ENCODE measurements at regions of chr4 and their contacts with region 1.

Region 1: GRCh38 chr4:53196882-53197771 is 168.7 kb downstream of the SCFD2 start:
- DNase-seq: peak; percentile 80
- H3K4me3 ChIP-seq: peak overlapping the region; percentile 65
- H3K27ac ChIP-seq: peak overlapping the region; percentile 37
- H3K4me1 ChIP-seq: peaks cover 62% of the 10 kb centered on the region
- H3K27me3 ChIP-seq: no peaks in the 10 kb centered on the region

Region 2: DNA sequence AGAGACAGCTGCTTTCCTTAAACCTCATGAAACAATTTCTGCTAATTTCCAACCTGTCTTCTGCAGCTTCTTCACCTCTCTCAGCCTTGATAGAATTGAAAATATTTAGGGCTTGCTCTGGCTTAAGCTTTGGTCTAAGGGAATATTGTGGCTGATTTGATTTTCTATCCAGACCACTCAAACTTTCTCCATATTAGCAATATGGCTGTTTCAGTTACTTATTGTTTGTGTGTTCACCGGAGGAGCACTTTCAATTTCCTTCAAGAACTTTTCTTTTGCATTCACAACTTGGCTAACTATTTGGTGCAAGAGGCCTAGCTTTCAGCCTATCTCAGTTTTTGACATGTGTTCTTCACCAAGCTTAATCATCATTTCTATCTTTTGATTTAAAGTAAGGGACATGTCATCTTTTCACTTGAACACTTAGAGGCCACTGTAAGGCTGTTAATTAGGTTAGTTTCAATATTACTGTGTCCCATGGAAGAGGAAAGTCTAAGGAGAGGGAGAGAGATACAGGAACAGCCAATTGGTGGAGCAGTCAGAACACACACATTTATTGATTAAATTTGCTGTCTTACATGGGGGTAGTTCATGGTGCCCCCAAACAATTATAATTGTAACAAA is 121.9 kb before region 1 on chr4:
- in situ Hi-C with region 1: no loop called
- DNase-seq: no peak
- H3K4me3 ChIP-seq: no peak overlapping the region
- H3K27ac ChIP-seq: no peak overlapping the region
- H3K4me1 ChIP-seq: no peaks in the 10 kb centered on the region
- H3K27me3 ChIP-seq: no peaks in the 10 kb centered on the region

Region 3: DNA sequence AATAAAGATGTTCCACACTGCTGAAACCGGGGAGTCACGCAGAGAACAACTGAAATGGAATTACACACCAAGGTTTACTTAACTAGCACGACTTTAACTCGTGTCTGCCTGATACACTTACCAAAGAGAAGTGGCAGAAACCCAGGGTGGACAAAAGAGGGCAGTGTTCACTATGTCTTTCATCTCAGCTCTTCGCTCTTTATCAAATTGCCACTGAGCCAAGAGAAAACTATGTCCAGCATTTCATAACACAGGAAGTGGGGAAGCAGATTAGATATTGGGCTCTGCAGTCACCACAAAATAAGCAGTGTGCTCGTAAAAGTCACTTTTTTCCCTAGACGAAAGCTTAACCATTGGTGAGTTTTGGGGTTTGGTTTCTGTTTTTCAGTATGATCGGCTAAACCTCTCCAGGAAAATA is 711.5 kb after region 1 on chr4:
- in situ Hi-C with region 1: loop called (anchors 25 kb)
- DNase-seq: peak; percentile 89
- H3K4me3 ChIP-seq: peak overlapping the region; percentile 66
- H3K27ac ChIP-seq: peak overlapping the region; percentile 66
- H3K4me1 ChIP-seq: peaks cover 49% of the 10 kb centered on the region
- H3K27me3 ChIP-seq: no peaks in the 10 kb centered on the region